Naive thymus-derived CD8-positive, alpha-beta T cell (primary cell): ENCODE measurements at regions of chr2 and their contacts with region 1.

Region 1: GRCh38 chr2:208254871-208255556 is at the start of gene IDH1:
- DNase-seq: peak; percentile 79 to 98 (median 92)
- ATAC-seq: peak; percentile 69 to 74
- H3K4me3 Mint-ChIP-seq: peak within 1 kb of the TSS; percentile 95 to 100 (median 99)
- H3K27ac Mint-ChIP-seq: peak within 1 kb of the TSS; percentile 80 to 94 (median 89)
- H3K4me1 Mint-ChIP-seq: peaks cover 13 to 50% (median 29%) of the 10 kb centered on the region in 4 donors
- H3K27me3 Mint-ChIP-seq: peaks cover 0 to 2% (median 0%) of the 10 kb centered on the region in 5 donors
- polyA plus RNA-seq, gene IDH1: 2.6 to 5.5 (median 3.8) TPM

Region 2: DNA sequence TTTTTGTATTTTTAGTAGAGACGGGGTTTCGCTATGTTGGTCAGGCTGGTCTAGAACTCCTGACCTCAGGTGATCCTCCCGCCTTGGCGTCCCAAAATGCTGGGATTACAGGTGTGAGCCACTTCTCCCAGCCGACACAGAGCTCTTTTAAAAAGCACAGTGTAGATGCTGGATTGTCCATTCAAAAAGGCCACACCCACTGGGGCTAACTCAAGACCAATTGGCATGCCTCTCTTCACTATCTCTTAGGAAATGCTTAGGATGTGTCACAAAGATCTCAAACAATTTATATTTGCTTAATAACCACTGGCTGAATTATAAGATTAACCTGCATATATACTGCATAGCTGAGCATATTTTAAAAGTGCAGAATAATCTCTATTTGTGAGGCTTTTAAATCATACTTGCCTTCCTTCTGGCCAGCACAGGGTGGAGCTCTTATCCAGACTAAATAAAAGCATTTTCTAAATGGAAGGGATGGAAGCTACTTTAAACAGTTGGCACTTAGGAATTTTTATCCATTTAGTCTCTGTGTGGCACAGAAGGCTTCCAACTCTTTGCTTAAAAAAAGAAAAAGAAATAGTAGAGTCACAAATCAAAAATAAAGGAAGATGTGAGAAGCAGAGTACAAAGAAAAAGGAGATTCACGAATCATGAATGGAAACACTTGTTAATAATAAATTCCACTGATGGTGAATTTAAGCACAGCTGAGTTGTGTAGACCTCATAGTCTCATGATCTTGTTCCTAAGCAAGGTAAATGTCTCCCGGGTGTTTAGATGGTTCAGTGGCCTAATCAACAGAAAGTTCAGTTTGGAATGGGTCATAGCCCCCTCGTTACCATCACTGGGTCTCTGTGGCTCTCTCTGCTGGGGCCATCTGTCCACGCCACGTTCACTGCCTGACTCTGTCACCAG is 153.0 kb before region 1 on chr2:
- POLR2A ChIA-PET with region 1: no interaction called
- DNase-seq: no peak
- ATAC-seq: no peak
- H3K4me3 Mint-ChIP-seq: peak overlapping the region in 4 of 10 donors; percentile 6 to 67 (median 36)
- H3K27ac Mint-ChIP-seq: peak overlapping the region in 2 of 10 donors; percentile 10 to 88
- H3K4me1 Mint-ChIP-seq: peaks cover 5 to 32% (median 18%) of the 10 kb centered on the region in 4 donors
- H3K27me3 Mint-ChIP-seq: peaks cover 0 to 11% (median 6%) of the 10 kb centered on the region in 5 donors

Region 3: DNA sequence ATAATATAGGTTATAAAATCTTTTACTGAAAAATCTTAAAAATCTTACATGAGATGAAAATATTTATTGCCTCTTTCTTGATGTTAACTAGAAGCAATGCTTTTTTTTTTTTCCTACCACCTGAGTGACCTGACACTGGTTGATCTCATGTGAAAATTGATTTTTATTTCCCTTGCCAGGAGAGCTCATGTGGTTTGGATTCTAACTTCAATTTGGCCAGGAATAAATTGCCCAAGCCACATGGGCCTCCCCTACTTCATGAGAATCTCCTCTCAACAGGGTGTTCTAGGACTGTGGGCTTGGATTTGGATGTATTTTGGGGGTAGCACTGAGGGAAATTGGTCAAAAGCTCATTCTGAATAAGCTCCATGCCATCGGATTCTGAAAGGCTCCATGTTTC is 20.2 kb before region 1 on chr2:
- POLR2A ChIA-PET with region 1: no interaction called
- DNase-seq: no peak
- ATAC-seq: no peak
- H3K4me3 Mint-ChIP-seq: no peak overlapping the region
- H3K27ac Mint-ChIP-seq: no peak overlapping the region
- H3K4me1 Mint-ChIP-seq: no peaks in the 10 kb centered on the region
- H3K27me3 Mint-ChIP-seq: peaks cover 0 to 4% (median 0%) of the 10 kb centered on the region in 5 donors

Region 4: DNA sequence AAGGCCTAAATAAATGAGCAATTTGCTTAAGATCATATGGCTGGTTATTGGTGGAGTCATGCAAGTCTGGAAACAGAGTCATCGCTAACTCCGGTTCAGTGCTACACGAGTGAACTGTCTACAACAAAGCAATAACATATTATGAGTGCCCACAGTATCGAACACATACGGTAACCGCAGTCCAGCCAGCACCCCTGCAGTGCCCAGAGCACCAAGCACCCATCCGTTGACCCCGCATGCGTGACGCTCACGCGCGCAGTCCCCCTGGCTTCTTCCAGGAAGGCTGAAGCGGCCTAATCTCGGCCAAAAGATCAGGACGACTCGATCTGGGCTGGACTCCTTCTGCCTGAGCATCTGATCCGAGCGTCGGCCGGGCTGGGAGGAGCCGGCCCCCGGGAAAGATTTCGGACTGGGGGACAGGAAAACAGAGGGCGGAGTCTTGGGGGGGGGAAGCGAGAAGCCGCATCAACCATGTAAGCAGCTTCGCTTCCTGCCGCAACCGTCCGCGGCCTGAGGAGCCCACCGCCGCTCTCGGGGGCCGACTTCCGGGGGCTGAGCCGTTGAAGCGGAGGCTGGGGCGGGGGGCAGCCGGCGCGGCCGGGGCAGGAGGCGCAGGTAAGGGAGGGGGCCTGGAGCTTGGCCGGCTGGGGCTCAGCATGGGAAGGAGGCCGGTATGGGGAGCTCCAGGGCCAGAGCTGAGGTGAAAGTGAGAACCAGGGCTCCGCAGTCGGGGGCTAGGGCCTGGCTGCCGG is 11.0 kb after region 1 on chr2 and contains the start of gene PIKFYVE:
- POLR2A ChIA-PET with region 1: interaction called, 98 read pairs
- DNase-seq: peak; percentile 65 to 93 (median 85)
- ATAC-seq: peak; percentile 82 to 83
- H3K4me3 Mint-ChIP-seq: peak within 1 kb of the TSS; percentile 88 to 99 (median 96)
- H3K27ac Mint-ChIP-seq: peak within 1 kb of the TSS; percentile 94 to 99 (median 98)
- H3K4me1 Mint-ChIP-seq: peaks cover 19 to 57% (median 49%) of the 10 kb centered on the region in 4 donors
- H3K27me3 Mint-ChIP-seq: no peaks in the 10 kb centered on the region
- polyA plus RNA-seq, gene PIKFYVE: 5.3 to 6.6 (median 5.4) TPM